Activated CD8-positive, alpha-beta memory T cell treated with anti-CD3 and anti-CD28 coated beads, Interleukin-2, amount 10 ng/mL, durations not matched to agents 7 days and 5 days (primary cell): ENCODE measurements at regions of chr7 and their contacts with region 1.

Region 1: GRCh38 chr7:25093268-25093826 is 31.7 kb downstream of the CYCS start:
- DNase-seq: peak; percentile 86
- ATAC-seq: peak; percentile 90
- H3K4me3 Mint-ChIP-seq: no peak overlapping the region
- H3K27ac Mint-ChIP-seq: no peak overlapping the region
- H3K4me1 Mint-ChIP-seq: peaks cover 13% of the 10 kb centered on the region
- H3K27me3 Mint-ChIP-seq: peaks cover 15% of the 10 kb centered on the region

Region 2: DNA sequence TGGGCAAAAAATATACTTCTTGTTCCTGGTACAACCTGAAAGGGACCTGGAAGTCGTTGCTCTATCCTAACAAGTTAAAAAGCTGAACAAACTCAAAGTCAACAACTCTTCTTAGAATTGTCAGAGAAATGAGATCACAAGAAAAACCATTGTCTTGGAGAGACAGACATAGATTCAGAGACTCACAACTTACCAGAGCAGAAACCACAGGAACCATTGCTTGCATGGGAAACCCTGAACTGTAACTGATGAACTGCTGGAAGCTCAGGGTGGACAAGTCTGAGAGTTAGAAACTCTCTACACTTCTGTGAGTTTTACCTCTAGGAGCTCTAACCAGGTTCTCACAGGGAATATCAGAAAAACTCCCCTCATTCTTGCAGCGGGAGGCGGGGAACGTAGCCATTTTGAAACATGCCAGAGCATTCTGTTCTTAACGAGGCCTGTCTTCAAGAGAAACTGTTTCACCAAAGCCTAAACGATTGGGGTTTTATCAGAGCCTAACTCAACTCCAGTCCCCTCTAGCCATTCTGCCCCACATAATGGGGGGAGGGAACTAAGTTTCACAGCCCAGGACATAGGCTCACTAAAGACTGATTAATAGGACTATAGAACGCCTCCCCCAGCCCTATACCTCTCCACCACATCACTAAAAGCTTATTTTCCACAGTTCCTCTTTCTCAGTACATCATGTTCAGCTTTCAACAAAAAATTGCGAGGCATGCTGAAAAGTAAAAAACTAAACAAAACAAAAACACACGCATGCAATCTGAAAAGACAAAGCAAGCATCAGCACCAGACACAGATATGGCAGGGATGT is 324.1 kb before region 1 on chr7:
- CTCF ChIA-PET with region 1: interaction called, 11 read pairs
- DNase-seq: no peak
- ATAC-seq: peak; percentile 53
- H3K4me3 Mint-ChIP-seq: no peak overlapping the region
- H3K27ac Mint-ChIP-seq: no peak overlapping the region
- H3K4me1 Mint-ChIP-seq: peaks cover 31% of the 10 kb centered on the region
- H3K27me3 Mint-ChIP-seq: peaks cover 33% of the 10 kb centered on the region

Region 3: DNA sequence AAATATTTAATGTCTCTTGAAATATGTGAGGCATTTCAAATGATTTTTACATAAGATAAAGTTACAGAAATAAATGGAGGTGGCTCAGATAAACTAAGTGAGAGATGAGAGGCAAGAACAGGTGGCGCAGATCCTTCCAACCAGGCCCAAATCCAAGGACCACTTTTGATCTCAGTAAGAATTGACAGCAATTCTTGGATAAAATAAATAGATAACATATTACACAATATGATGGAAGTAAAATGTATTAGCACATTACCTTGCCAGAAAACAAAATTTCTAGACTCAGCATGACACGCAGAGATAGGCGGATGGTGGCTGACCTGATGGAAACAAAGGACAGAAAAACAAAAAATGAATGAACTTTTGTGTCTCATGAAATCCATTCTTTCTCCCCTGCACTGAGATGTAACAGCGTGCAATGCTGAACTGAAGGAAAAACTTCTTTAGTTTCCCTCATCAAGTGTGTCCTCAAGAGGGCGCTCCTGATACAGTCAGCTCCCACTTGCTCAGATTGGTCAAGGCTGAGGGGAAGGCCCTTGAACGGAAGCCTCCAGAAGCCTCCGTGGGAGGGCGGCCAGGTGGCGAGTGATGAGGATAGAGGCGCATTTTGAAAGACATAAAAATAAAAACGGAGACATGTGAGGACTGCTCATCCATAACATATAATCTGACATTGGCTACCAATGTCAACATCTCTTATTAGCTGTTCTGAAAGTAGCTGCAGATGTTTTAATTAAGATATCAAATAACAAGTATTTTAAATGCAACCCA is 273.2 kb before region 1 on chr7:
- CTCF ChIA-PET with region 1: interaction called, 92 read pairs
- DNase-seq: peak; percentile 89
- ATAC-seq: peak; percentile 54
- H3K4me3 Mint-ChIP-seq: peak overlapping the region; percentile 50
- H3K27ac Mint-ChIP-seq: peak overlapping the region; percentile 98
- H3K4me1 Mint-ChIP-seq: peaks cover 45% of the 10 kb centered on the region
- H3K27me3 Mint-ChIP-seq: no peaks in the 10 kb centered on the region

Region 4: DNA sequence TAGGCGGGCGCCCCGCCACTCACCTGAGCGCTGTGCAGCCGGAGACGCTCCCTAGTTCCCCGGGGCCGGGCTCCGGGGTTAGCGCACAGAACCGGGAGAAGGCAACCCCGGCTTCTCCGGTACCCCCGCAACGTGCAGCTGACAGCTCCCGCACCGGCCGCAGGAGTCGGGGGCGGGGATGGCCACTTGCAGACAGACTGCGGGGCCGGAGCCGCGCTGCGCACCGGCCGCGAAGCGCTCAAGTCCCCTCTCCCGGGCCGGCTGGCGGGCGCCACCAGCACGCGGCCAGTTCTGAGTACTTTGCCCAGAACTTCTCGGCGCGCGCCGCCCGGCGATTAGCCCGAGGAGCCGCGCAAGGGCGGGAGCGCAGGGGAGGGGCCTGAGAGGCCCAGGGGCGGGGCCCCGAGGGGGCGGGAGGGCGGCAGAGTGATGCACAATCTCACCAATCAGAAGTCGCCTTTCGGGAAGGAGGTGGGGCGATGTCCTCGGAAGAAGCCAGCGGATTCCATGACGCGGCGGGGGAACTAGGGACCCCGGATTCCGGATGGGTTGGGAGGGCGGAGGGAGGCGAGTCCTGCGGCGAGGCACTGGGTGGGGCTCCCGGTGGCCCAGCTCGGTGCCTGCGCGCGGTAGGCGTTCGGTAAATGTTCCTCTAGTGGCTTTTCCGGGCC is 113.3 kb before region 1 on chr7 and contains the start of gene OSBPL3:
- CTCF ChIA-PET with region 1: interaction called, 54 read pairs
- DNase-seq: peak; percentile 96
- ATAC-seq: peak; percentile 83
- H3K4me3 Mint-ChIP-seq: peak within 1 kb of the TSS; percentile 98
- H3K27ac Mint-ChIP-seq: peak within 1 kb of the TSS; percentile 91
- H3K4me1 Mint-ChIP-seq: peaks cover 49% of the 10 kb centered on the region
- H3K27me3 Mint-ChIP-seq: peaks cover 6% of the 10 kb centered on the region
- total RNA-seq, gene OSBPL3: 98.3 to 133 TPM

Region 5: GRCh38 chr7:25069900-25070443 is 23.4 kb before region 1 on chr7:
- CTCF ChIA-PET with region 1: interaction called, 42 read pairs
- DNase-seq: peak; percentile 66
- ATAC-seq: peak; percentile 79
- H3K4me3 Mint-ChIP-seq: no peak overlapping the region
- H3K27ac Mint-ChIP-seq: no peak overlapping the region
- H3K4me1 Mint-ChIP-seq: peaks cover 16% of the 10 kb centered on the region
- H3K27me3 Mint-ChIP-seq: no peaks in the 10 kb centered on the region

Region 6: DNA sequence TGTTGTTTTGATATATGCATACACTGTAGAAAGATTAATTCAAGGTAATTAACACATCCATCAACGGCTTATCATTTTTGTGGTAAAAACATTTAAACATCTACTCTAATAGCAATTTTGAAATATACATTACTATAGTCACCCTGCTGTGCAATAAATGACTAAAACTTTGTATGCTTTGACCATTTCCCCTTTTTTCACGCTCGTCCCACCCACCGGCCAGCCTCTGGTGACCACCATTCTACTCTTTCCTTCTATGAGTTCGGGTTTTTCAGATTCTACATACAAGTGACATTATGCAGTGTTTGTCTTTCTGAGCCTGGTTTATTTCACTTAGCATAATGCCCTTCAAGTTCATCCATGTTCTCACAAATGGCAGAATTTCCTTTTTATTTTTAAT is 10.4 kb after region 1 on chr7:
- CTCF ChIA-PET with region 1: interaction called, 19 read pairs
- DNase-seq: no peak
- ATAC-seq: no peak
- H3K4me3 Mint-ChIP-seq: no peak overlapping the region
- H3K27ac Mint-ChIP-seq: no peak overlapping the region
- H3K4me1 Mint-ChIP-seq: no peaks in the 10 kb centered on the region
- H3K27me3 Mint-ChIP-seq: peaks cover 12% of the 10 kb centered on the region

Region 7: DNA sequence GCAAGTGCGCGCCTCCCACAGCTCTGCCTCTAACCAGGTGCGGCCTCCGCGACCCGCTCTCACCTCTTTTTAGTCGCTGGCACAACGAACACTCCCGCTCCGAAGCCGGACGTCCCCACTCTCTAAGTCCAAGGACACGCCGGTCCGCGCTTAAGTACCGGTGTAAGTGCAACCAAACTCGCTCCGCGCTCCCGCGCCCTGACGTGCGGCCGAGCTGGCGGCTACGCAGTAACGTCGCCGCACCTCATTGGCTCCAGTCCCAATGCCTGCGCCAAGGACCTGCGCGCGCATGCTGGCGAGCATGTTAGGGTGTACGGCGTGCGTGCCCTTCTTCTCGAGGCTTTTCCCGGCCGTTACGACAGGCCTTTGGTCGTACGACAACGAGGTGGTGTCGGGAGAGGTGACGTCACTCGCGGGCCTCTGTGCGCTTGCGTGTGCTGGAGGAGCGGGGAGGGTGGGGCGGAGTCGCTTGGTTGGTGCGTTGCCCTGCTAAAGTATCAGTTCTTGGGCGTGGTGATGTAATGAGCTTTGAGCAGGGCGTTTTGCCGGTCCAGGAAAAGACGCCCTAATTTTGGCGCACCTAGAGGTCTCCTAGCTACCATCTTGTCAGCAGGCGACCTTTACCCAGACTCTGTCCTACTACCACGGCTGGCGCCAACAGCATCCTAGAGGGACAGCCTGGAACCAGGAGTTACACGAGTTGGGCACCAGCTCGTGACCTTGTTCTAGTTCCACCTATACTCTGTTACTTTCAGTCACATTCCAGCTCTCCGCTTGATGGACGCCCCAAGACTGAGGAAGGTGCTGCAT is 32.0 kb after region 1 on chr7 and contains the start of gene CYCS:
- CTCF ChIA-PET with region 1: interaction called, 24 read pairs
- DNase-seq: peak; percentile 100
- ATAC-seq: peak; percentile 93
- H3K4me3 Mint-ChIP-seq: peak within 1 kb of the TSS; percentile 96
- H3K27ac Mint-ChIP-seq: peak within 1 kb of the TSS; percentile 96
- H3K4me1 Mint-ChIP-seq: peaks cover 21% of the 10 kb centered on the region
- H3K27me3 Mint-ChIP-seq: no peaks in the 10 kb centered on the region
- total RNA-seq, gene CYCS: 137 to 160 TPM